ENCODE measurements at regions of chr6 and their contacts with region 1.

Region 1: GRCh38 chr6:7238900-7239589 is 74.0 kb downstream of the SSR1 start:
- DNase-seq: peak; percentile 65
- CTCF ChIP-seq: peak; percentile 76

Region 2: DNA sequence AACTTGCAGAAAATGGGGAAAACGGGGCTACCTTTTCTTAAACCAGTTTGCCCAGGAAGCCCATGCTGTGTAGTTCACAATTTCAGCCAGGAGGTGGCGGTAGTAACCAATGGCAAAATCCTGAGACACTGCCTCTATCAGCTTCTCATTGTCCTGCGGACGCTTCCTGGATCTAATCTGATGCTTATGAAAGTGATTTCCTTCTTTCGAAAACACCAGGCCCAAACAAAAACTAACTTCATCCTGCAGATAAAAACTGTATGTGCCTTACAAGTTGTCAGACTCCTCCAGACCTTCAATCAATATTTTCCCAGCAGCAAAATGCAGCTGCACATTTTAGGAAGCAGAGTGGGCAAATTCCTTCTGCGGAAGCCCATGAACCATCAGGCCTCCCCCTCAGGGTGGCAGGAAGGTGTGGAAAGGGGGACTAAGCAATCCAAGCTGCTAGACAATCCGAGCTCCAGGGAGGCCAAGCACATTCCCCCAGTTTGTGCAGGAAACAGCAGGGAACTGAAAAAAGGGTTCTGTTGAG is 562.1 kb before region 1 on chr6:
- in situ Hi-C with region 1: loop called (anchors 25 kb)
- DNase-seq: peak; percentile 71
- CTCF ChIP-seq: peak; percentile 88

Region 3: GRCh38 chr6:6788394-6789020 is 450.5 kb before region 1 on chr6:
- in situ Hi-C with region 1: loop called (anchors 25 kb)
- DNase-seq: peak; percentile 40
- CTCF ChIP-seq: peak; percentile 71

Measured in GM13977 (cell line).